HCT116 (cell line): ENCODE measurements at regions of chr11 and their contacts with region 1.

Region 1: GRCh38 chr11:94623120-94623735 is 56.1 kb downstream of the PIWIL4 start:
- DNase-seq: peak; percentile 88
- ATAC-seq: peak; percentile 99
- H3K4me3 ChIP-seq: no peak overlapping the region
- H3K27ac ChIP-seq: no peak overlapping the region
- H3K4me1 ChIP-seq: no peaks in the 10 kb centered on the region
- H3K27me3 ChIP-seq: no peaks in the 10 kb centered on the region
- CTCF ChIP-seq: peak; percentile 71 to 99 (median 90)
- POLR2A ChIP-seq: no peak
- RAD21 ChIP-seq: peak; percentile 99

Region 2: DNA sequence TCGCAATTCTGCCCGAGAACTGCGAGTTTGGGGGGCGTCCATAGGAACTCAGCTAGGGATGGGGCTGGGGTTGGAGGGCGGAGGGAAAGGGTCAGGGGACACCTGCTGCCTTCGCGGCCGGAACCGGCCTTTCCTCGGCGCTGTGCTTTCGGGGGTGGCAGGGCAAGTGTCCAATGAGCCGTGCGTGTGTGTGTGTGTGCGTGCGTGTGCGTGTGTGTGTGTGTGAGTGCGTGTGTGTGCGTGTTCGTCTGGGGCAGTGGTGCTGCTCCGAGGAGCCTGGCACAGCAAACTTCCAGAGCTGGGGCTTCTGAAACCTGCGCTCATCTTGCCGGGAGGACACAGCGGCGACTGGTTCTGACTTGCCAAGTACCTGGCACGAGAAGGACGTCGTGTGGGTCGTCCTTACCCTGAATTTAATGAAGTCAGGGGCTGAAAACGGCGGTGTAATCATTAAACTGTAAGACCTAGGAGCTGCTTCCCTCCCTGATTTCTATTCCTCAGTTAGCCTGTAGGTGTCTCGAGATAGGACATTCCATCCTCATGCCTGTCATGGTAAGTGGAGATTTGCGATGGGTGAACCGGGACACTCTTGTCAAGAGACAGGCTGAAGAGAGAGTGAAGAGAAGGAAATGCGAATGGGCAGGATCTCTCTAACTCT is 117.9 kb after region 1 on chr11:
- CTCF ChIA-PET with region 1: interaction called, 15 read pairs
- POLR2A ChIA-PET with region 1: no interaction called
- RAD21 ChIA-PET with region 1: no interaction called
- intact Hi-C with region 1: no loop called
- DNase-seq: peak; percentile 48
- ATAC-seq: peak; percentile 76
- H3K4me3 ChIP-seq: no peak overlapping the region
- H3K27ac ChIP-seq: no peak overlapping the region
- H3K4me1 ChIP-seq: peaks cover 25 to 42% of the 10 kb centered on the region in 2 experiments
- H3K27me3 ChIP-seq: no peaks in the 10 kb centered on the region
- CTCF ChIP-seq: peak; percentile 9 to 56 (median 48); a peak in 4 of 6 replicates
- POLR2A ChIP-seq: no peak
- RAD21 ChIP-seq: peak; percentile 25; the same call in 1 of the 2 replicates

Region 3: DNA sequence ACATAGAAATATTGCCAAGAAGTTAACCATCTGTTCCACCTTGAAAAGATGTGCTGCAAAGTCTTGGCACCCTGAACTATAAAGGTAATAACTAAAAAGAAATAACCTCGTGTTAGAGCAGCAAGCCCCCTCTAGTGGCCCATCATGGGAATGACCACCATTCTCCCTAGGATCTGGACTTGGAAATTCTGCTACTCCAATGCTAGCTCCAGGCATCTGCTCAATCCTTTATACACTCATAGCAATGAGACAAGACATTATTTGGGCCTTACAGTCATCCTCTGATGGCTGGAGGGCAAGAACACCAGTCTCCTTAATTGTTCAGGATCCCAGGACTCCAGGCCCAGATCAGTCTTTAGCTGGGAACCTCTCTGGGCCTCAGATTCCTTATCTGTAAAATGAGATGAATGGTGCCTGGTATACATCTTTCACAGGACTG is 274.1 kb after region 1 on chr11:
- CTCF ChIA-PET with region 1: interaction called, 13 read pairs
- POLR2A ChIA-PET with region 1: interaction called, 3 read pairs
- RAD21 ChIA-PET with region 1: interaction called in 1 of 2 experiments, 9 read pairs
- intact Hi-C with region 1: loop called (anchors 1 kb)
- DNase-seq: peak; percentile 47
- ATAC-seq: peak; percentile 91
- H3K4me3 ChIP-seq: no peak overlapping the region
- H3K27ac ChIP-seq: no peak overlapping the region
- H3K4me1 ChIP-seq: no peaks in the 10 kb centered on the region
- H3K27me3 ChIP-seq: no peaks in the 10 kb centered on the region
- CTCF ChIP-seq: peak; percentile 90 to 91 (median 90)
- POLR2A ChIP-seq: no peak
- RAD21 ChIP-seq: peak; percentile 90

Region 4: DNA sequence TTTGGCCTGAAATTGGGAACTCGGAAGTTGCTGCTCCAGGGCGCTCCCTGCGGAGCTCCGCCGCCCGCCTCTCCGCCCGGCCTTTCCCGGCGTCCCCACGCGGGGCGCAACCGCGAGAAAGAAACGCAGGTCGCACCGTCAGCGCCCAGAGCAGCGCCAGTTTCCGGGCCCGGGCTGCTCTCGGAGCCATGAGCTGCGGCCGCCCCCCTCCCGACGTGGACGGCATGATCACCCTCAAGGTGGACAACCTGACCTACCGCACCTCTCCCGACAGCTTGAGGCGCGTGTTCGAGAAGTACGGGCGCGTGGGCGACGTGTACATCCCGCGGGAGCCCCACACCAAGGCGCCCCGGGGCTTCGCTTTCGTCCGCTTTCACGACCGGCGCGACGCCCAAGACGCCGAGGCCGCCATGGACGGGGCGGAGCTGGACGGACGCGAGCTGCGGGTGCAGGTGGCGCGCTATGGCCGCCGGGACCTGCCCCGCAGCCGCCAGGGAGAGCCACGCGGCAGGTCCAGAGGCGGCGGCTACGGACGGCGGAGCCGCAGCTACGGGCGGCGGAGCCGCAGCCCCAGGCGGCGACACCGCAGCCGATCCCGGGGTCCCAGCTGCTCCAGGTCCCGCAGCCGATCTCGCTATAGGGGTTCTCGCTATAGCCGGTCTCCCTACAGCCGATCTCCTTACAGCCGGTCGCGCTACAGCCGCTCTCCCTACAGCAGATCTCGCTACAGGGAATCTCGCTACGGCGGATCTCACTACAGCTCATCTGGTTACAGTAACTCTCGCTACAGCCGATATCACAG is 444.0 kb after region 1 on chr11:
- CTCF ChIA-PET with region 1: interaction called, 4 read pairs
- POLR2A ChIA-PET with region 1: interaction called, 3 read pairs
- RAD21 ChIA-PET with region 1: no interaction called
- intact Hi-C with region 1: loop called (anchors 2 kb)
- DNase-seq: no peak
- ATAC-seq: peak; percentile 75
- H3K4me3 ChIP-seq: peak overlapping the region; percentile 69 to 84
- H3K27ac ChIP-seq: peak overlapping the region; percentile 96
- H3K4me1 ChIP-seq: peaks cover 14 to 16% of the 10 kb centered on the region in 2 experiments
- H3K27me3 ChIP-seq: no peaks in the 10 kb centered on the region
- CTCF ChIP-seq: peak; percentile 21 to 43 (median 39); a peak in 4 of 6 replicates
- POLR2A ChIP-seq: peak; percentile 80
- RAD21 ChIP-seq: peak; percentile 27

Region 5: DNA sequence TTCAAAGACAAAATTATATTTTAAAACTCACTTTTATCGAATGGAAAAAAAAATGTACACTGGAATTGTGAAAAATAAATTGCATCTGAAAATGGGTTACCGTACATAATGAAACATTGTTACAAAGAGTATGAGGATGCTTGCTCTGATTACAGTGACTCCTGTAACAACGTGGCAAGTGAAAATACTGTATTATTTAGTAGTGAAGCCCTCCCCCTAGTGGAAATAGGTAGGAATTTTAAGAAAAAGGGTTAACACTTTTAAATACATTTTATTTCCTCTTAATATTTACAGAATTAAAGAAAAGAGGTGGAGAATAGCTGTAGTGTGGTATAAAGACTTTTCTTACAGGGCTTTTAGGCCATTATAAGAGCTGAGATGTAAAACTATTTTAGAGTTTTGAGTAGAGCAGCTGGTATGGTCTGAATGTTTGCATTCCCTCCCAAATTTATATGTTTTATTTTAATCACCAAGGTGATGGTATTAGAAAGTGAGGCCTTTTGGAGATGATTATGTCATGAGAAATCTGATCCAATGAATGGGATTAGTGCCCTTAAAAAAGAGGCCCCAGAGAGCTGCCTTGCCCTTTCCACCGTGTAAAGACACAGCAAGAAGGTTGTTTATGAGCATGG is 1141.2 kb after region 1 on chr11:
- CTCF ChIA-PET with region 1: no interaction called
- POLR2A ChIA-PET with region 1: no interaction called
- RAD21 ChIA-PET with region 1: no interaction called
- intact Hi-C with region 1: loop called (anchors 5 kb)
- DNase-seq: peak; percentile 27
- ATAC-seq: peak; percentile 72; the same call in 1 of the 2 replicates
- H3K4me3 ChIP-seq: no peak overlapping the region
- H3K27ac ChIP-seq: no peak overlapping the region
- H3K4me1 ChIP-seq: no peaks in the 10 kb centered on the region
- H3K27me3 ChIP-seq: no peaks in the 10 kb centered on the region
- CTCF ChIP-seq: peak; percentile 42 to 79 (median 66); a peak in 5 of 6 replicates
- POLR2A ChIP-seq: no peak
- RAD21 ChIP-seq: peak; percentile 81